ENCODE measurements at regions of chr18 and their contacts with region 1.

Region 1: DNA sequence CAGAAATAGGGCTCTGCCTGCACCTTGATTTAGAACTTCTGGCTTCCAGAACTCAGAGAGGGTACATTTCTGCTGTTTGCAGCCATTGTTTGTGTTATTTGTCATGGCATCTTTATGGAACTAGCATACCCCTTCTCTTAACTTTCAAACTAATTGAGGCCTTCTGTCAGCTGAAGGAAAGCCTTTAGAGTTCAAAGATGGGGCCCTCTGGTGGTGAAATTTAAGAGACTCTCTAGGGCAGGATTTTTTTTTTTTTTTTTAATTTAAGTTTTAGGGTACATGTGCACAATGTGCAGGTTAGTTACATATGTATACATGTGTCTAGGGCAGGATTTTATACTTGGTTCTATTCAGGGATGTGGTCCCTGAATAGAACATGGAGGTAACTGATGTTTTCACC is 260.6 kb upstream of the LINC00305 start:
- DNase-seq: peak; percentile 5
- H3K4me3 ChIP-seq: no peak overlapping the region
- H3K27ac ChIP-seq: no peak overlapping the region
- H3K4me1 ChIP-seq: peaks cover 3% of the 10 kb centered on the region
- H3K27me3 ChIP-seq: no peaks in the 10 kb centered on the region
- CTCF ChIP-seq: peak in 1 of 2 donors; percentile 24
- POLR2A ChIP-seq: no peak

Region 2: DNA sequence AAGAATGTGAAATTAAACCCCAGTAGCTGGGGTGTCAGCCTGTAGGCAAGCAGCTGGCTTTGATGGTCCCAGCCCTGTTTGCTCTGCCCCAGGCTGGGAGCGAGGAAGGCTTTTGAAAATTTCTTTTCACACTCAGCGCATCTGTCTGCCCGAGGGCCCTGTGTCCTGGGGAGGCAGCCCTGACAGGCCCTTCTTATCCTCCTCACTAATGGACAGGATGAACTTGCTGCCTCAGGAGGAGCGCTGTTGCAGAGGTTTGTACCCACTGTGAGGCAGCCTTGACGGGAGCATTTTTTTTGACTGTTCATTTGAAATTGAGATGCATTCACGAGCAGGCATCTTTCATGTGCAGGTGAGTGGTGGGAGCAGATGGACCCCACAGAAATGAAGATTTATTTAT is 377.2 kb before region 1 on chr18:
- CTCF ChIA-PET with region 1: no interaction called
- POLR2A ChIA-PET with region 1: no interaction called
- dilution Hi-C with region 1: no loop called
- intact Hi-C with region 1: loop called (anchors 2 kb)
- DNase-seq: no peak
- H3K4me3 ChIP-seq: no peak overlapping the region
- H3K27ac ChIP-seq: no peak overlapping the region
- H3K4me1 ChIP-seq: no peaks in the 10 kb centered on the region
- H3K27me3 ChIP-seq: no peaks in the 10 kb centered on the region
- CTCF ChIP-seq: no peak
- POLR2A ChIP-seq: no peak

Region 3: DNA sequence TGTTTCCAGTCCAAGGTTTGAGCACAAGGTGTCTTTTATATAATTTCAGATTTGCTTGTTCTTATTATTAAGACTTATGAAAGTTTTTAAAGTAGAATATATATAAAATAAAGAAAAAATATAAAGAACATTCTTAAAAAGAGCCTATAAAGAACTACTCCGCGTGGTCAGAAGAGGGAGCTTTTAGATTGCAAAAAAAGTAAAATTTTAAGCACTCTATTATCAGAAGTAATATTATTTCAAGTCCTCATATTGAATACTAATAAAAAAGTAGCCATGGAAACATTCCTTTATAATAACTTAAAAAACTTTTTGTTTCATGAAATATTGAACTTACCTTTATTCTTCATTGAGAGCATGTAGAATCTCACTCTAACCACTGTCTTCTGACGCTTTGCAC is 312.0 kb before region 1 on chr18:
- CTCF ChIA-PET with region 1: interaction called, 9 read pairs
- POLR2A ChIA-PET with region 1: no interaction called
- dilution Hi-C with region 1: no loop called
- intact Hi-C with region 1: loop called (anchors 5 kb)
- DNase-seq: peak; percentile 7
- H3K4me3 ChIP-seq: no peak overlapping the region
- H3K27ac ChIP-seq: no peak overlapping the region
- H3K4me1 ChIP-seq: no peaks in the 10 kb centered on the region
- H3K27me3 ChIP-seq: no peaks in the 10 kb centered on the region
- CTCF ChIP-seq: no peak
- POLR2A ChIP-seq: no peak

Region 4: DNA sequence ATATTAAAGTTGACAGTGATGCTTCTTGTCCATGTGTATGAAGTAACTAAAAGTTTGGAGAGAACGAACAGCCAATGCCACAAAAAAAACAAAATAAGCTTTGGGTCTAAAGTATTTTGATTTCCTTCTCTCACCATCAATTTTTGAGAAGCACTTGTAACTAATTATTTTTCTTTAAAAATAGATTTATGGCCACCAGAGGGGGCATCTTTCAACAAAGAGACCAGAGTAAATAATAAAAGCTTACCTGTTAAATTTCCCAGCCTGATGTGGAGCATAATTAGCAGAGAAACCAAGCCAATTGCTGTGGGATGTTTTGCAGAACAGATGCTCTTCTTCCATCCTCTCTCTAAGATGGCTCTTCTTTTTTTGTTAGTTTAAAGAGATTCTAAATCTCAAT is 289.6 kb before region 1 on chr18:
- CTCF ChIA-PET with region 1: interaction called, 11 read pairs
- POLR2A ChIA-PET with region 1: no interaction called
- dilution Hi-C with region 1: no loop called
- intact Hi-C with region 1: loop called (anchors 1 kb)
- DNase-seq: peak; percentile 1
- H3K4me3 ChIP-seq: no peak overlapping the region
- H3K27ac ChIP-seq: no peak overlapping the region
- H3K4me1 ChIP-seq: no peaks in the 10 kb centered on the region
- H3K27me3 ChIP-seq: no peaks in the 10 kb centered on the region
- CTCF ChIP-seq: no peak
- POLR2A ChIP-seq: no peak

Region 5: DNA sequence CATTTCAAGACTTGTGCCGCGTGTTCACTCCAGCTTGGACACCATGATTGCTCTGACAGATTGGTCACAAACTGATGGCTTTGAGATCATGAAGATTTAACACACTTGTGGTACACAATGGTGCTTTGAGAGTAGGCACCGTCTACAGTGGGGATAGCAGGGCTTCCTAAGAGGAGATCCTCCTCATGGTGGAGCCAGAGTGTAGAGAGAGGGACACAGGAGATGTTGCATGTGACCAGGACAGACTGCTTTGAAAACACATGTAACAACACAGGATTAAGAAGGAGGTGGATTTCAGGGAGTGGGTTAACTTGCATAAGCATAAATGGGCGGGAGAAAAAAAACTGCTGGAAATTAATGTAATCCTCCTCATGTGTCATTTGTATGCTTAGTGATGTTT is 164.9 kb before region 1 on chr18:
- CTCF ChIA-PET with region 1: interaction called, 3 read pairs
- POLR2A ChIA-PET with region 1: no interaction called
- dilution Hi-C with region 1: no loop called
- intact Hi-C with region 1: loop called (anchors 1 kb)
- DNase-seq: peak; percentile 21
- H3K4me3 ChIP-seq: no peak overlapping the region
- H3K27ac ChIP-seq: no peak overlapping the region
- H3K4me1 ChIP-seq: no peaks in the 10 kb centered on the region
- H3K27me3 ChIP-seq: no peaks in the 10 kb centered on the region
- CTCF ChIP-seq: peak in 1 of 2 donors; percentile 5
- POLR2A ChIP-seq: no peak

Measured in endothelial cell of umbilical vein (primary cell).